ENCODE measurements at regions of chr2 and their contacts with region 1.

Region 1: GRCh38 chr2:80073134-80073561 is 231.4 kb downstream of the LRRTM1 start:
- DNase-seq: peak; percentile 76
- H3K4me3 Mint-ChIP-seq: no peak overlapping the region
- H3K27ac Mint-ChIP-seq: no peak overlapping the region
- H3K4me1 Mint-ChIP-seq: peaks cover 13% of the 10 kb centered on the region
- H3K27me3 Mint-ChIP-seq: no peaks in the 10 kb centered on the region
- CTCF ChIP-seq: peak; percentile 63

Region 2: DNA sequence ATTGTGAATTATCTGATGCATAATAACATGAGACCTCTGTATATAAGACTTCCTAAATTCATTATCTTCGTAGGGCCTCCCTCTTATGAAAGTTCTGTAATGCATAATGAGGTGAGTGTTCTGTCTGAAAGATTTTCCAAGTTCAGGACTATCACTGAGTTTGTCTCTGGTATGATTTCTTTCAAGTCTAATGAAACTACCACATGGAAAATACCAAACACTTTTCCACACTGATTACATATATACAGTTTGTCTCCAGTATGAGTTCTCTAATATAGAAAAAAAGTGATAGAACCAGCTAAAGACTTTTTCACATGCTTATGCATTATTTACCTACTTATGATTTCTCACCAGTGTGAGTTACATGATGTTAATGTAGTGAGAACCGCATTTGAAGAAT is 525.6 kb before region 1 on chr2:
- CTCF ChIA-PET with region 1: no interaction called
- POLR2A ChIA-PET with region 1: no interaction called
- intact Hi-C with region 1: no loop called
- DNase-seq: no peak
- H3K4me3 Mint-ChIP-seq: no peak overlapping the region
- H3K27ac Mint-ChIP-seq: no peak overlapping the region
- H3K4me1 Mint-ChIP-seq: no peaks in the 10 kb centered on the region
- H3K27me3 Mint-ChIP-seq: no peaks in the 10 kb centered on the region
- CTCF ChIP-seq: no peak

Region 3: DNA sequence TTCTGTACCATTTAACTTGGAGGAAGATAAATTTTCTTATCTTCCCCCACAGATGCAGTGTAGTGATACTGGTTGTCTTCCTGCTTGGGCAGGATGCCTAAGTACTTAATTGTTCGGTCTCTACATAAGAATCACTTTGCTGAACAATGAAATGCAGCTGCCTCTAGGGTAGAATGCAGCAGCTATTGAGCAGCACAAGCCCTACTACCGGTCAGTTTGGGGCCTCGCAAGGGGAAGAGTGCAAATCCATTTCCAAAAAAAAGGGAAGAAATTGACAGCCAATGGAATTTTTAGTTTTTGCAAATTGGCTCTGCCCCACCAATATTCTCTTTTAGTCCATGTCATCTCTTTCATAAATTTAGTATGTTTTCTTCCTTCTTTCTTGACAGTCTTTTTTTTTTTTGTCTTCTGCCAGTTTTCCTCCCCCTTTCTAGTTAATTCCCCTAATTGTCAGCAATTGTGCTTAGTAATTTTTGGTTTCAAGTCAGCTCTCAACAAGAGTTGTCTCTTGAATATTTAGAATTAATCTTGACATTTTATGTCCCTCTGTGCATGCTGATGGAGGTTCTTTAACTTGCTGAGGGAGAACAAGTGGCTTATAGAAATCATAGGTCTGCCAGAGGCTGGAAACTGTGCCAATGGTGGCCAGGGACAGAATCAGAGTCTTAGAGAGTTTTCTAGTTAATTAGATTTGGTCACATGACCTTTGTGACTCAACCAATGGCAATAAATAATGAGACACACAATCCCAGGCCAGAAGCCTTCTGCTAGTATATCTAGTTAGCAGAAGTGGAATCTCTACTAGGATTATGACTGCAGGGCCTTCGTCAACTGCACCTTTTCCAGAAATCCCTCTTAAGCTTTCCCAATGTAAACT is 290.3 kb before region 1 on chr2:
- CTCF ChIA-PET with region 1: no interaction called
- POLR2A ChIA-PET with region 1: no interaction called
- intact Hi-C with region 1: no loop called
- DNase-seq: no peak
- H3K4me3 Mint-ChIP-seq: no peak overlapping the region
- H3K27ac Mint-ChIP-seq: no peak overlapping the region
- H3K4me1 Mint-ChIP-seq: no peaks in the 10 kb centered on the region
- H3K27me3 Mint-ChIP-seq: no peaks in the 10 kb centered on the region
- CTCF ChIP-seq: no peak

Region 4: DNA sequence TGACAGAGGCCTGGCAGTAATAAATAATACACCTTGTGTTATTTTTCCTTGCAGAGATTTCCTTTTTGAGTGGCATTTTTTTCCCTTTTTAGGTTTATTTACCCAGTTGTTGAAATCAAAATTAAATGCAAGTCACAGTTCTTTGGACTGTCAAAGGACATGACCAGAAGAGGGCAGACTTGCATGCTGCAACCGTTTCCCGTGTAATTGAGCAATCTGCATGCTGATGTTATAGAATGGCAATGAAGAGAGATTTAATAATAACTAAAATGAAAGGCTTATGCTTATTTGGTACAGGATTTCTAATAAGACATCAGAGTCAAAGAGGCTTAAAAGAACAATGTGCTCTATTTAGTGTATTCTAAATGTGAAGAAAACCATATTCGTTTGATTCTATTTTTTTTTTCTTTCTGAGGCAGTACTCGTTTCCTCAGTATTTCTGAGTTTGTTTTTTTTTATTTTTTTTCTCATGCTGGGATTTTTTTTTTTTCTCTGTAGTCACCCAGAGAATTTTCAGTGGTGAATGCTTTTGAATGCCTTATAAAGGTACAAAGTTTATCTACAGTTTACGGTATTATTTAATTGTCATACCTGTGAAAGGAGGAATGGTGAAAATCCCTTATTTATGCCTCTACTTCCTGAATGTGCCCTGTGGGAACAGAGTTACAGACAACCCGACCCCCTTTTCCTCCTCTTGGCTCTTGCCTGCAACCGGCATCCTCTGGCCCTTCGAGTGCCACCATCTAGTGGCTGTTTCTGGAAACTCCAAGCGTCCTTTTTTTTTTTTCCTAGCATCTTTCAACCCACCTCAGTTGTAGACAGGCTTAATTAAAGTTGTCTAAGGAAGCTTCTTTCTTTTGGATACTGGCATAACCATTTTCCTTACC is 137.1 kb before region 1 on chr2:
- CTCF ChIA-PET with region 1: interaction called, 9 read pairs
- POLR2A ChIA-PET with region 1: no interaction called
- intact Hi-C with region 1: loop called (anchors 2 kb)
- DNase-seq: peak; percentile 76
- H3K4me3 Mint-ChIP-seq: peak overlapping the region; percentile 69
- H3K27ac Mint-ChIP-seq: peak overlapping the region; percentile 37
- H3K4me1 Mint-ChIP-seq: peaks cover 11% of the 10 kb centered on the region
- H3K27me3 Mint-ChIP-seq: peaks cover 12% of the 10 kb centered on the region
- CTCF ChIP-seq: peak; percentile 65

Region 5: DNA sequence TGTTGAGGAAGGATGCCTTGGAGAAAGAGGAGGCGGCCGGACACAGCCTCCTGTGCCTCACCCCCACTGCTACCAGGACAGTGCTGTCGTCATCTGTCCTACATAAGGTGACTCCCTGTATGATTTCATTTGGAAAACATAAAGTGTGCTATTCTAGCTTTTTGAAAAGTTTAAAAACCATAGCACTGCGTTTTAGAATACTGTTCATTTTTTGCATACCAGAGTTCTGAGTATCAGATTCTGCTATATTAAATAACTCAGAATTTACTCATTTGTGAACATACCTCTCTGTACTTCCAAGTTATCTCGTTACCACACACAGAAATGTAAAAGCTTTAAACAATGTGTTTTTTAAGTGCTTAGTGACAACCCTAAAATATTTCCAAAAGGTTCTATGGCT is 71.4 kb before region 1 on chr2:
- CTCF ChIA-PET with region 1: no interaction called
- POLR2A ChIA-PET with region 1: no interaction called
- intact Hi-C with region 1: no loop called
- DNase-seq: no peak
- H3K4me3 Mint-ChIP-seq: no peak overlapping the region
- H3K27ac Mint-ChIP-seq: no peak overlapping the region
- H3K4me1 Mint-ChIP-seq: peaks cover 18% of the 10 kb centered on the region
- H3K27me3 Mint-ChIP-seq: no peaks in the 10 kb centered on the region
- CTCF ChIP-seq: no peak

Region 6: DNA sequence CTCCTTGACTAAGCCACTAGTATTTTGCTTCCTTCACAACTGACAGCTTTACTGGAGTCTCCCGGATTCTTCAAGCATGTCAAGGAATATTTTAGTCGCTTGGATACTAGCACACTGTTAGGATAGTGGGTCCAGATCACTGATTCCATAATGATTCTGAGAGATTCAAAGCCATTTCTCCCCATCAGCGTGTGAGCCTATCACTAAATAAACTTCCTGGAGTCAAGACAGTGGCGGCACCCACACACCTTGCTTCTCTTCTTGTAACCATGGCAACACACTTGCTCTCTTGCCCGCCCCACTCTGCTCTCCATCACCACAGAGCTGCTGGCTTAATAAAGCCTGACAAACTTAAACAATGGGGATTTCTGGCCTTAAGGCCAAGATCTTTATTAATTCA is 13.7 kb before region 1 on chr2:
- CTCF ChIA-PET with region 1: interaction called, 21 read pairs
- POLR2A ChIA-PET with region 1: no interaction called
- intact Hi-C with region 1: no loop called
- DNase-seq: no peak
- H3K4me3 Mint-ChIP-seq: no peak overlapping the region
- H3K27ac Mint-ChIP-seq: no peak overlapping the region
- H3K4me1 Mint-ChIP-seq: peaks cover 7% of the 10 kb centered on the region
- H3K27me3 Mint-ChIP-seq: no peaks in the 10 kb centered on the region
- CTCF ChIP-seq: no peak

Region 7: DNA sequence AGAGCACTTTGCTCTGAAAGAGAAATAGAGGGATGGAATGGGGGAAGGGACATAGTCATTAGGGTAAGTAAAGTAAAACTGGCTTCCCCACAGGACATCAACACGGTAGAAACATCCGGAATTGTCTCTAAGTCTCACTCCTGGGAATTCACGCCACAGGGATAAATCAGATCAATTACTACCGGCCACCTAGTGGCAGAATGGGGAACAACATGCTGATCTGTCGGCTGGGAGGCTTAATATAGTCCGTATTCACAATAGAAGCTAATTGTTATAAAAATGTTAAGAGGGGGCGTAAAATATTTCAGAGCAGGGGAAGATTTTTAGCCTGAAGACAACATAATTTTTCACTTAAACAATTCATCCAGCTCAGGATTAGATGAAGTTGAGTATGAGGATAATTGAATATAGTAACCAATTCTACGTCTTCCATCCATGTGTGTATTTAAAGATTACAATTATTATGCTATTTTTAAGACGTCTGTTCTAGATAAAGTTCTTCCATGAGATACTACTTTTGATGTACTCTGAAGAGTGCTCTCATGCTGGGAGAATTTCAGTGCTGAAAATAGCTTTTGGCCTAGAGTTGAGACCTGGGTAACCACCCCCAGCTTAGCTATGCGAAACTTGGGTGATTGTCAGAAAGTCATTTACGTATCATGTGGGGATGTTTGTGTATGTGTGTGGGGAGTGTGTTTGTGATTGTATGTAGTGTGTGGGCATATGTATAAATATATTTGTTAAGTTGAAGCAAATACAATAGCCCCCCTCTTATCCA is 165.7 kb after region 1 on chr2:
- CTCF ChIA-PET with region 1: interaction called, 63 read pairs
- POLR2A ChIA-PET with region 1: interaction called, 6 read pairs
- intact Hi-C with region 1: loop called (anchors 1 kb)
- DNase-seq: peak; percentile 59
- H3K4me3 Mint-ChIP-seq: no peak overlapping the region
- H3K27ac Mint-ChIP-seq: no peak overlapping the region
- H3K4me1 Mint-ChIP-seq: peaks cover 7% of the 10 kb centered on the region
- H3K27me3 Mint-ChIP-seq: no peaks in the 10 kb centered on the region
- CTCF ChIP-seq: peak; percentile 70

Region 8: DNA sequence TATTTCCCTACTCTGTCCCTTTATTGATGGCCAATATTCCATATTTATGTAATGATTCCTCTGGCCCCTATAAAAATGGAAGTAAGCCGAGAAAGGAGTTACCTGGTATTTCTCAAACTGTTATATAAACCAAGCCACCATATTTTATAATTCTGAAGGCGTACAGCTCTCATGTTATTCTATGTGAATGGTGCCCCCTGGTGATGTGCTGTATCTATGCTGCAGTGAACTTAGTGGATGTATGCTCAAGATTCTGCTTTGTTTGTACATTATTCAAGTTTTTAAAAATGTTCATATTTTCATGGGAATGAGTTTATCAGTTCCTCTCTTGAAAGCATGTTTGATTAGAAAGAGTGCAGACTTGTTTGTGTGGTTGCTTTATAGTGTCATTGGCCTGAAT is 425.9 kb after region 1 on chr2:
- CTCF ChIA-PET with region 1: interaction called, 3 read pairs
- POLR2A ChIA-PET with region 1: no interaction called
- intact Hi-C with region 1: loop called (anchors 1 kb)
- DNase-seq: peak; percentile 59
- H3K4me3 Mint-ChIP-seq: no peak overlapping the region
- H3K27ac Mint-ChIP-seq: no peak overlapping the region
- H3K4me1 Mint-ChIP-seq: peaks cover 13% of the 10 kb centered on the region
- H3K27me3 Mint-ChIP-seq: no peaks in the 10 kb centered on the region
- CTCF ChIP-seq: peak; percentile 58